ENCODE measurements at regions of chr11 and their contacts with region 1.

Region 1: DNA sequence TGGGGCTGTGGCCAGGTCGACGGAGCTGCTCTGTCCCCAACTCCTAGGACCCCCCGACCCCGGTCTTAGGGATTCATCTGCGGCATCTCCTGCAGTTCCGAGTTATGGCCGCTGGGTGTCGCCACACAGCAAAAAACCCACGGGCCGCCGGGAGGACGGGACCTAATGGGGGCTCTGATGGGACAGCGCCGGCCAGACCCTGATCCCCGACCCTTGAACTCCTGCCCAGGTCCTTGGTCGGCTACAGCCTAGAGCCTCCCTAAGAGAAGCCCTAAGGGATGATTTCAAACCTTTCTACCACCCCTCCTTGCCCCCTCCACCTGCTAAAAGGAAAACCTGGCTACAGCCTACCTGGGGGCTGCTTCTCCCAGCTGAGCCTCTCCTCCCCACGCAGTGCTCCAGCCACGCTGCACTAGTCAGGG is 30.8 kb upstream of the LRRC10B start:
- DNase-seq: peak; percentile 37 to 63
- ATAC-seq: peak; percentile 16 to 71; a peak in 3 of 6 replicates
- H3K4me3 ChIP-seq: no peak overlapping the region
- H3K27ac ChIP-seq: no peak overlapping the region
- H3K4me1 ChIP-seq: no peaks in the 10 kb centered on the region
- CTCF ChIP-seq: peak; percentile 88
- EP300 ChIP-seq: no peak
- POLR2A ChIP-seq: no peak
- RAD21 ChIP-seq: peak; percentile 89 to 90

Region 2: GRCh38 chr11:61453695-61454094 is 24.0 kb before region 1 on chr11:
- CTCF ChIA-PET with region 1: interaction called, 42 read pairs
- POLR2A ChIA-PET with region 1: no interaction called
- DNase-seq: no peak
- ATAC-seq: no peak
- H3K4me3 ChIP-seq: no peak overlapping the region
- H3K27ac ChIP-seq: no peak overlapping the region
- H3K4me1 ChIP-seq: no peaks in the 10 kb centered on the region
- CTCF ChIP-seq: no peak
- EP300 ChIP-seq: no peak
- POLR2A ChIP-seq: no peak
- RAD21 ChIP-seq: no peak

Region 3: GRCh38 chr11:61488651-61489291 is 11.0 kb after region 1 on chr11:
- CTCF ChIA-PET with region 1: interaction called, 51 read pairs
- POLR2A ChIA-PET with region 1: no interaction called
- DNase-seq: no peak
- ATAC-seq: peak in 1 of 2 experiments; percentile 14; a peak in 1 of 6 replicates
- H3K4me3 ChIP-seq: no peak overlapping the region
- H3K27ac ChIP-seq: no peak overlapping the region
- H3K4me1 ChIP-seq: no peaks in the 10 kb centered on the region
- CTCF ChIP-seq: no peak
- EP300 ChIP-seq: no peak
- POLR2A ChIP-seq: no peak
- RAD21 ChIP-seq: no peak

Region 4: GRCh38 chr11:61509043-61510029 is 31.6 kb after region 1 on chr11:
- CTCF ChIA-PET with region 1: interaction called, 97 read pairs
- POLR2A ChIA-PET with region 1: no interaction called
- DNase-seq: peak; percentile 79 to 90
- ATAC-seq: peak; percentile 87 to 95
- H3K4me3 ChIP-seq: peak overlapping the region; percentile 44
- H3K27ac ChIP-seq: peak overlapping the region in 1 of 2 experiments; percentile 66; a peak in 3 of 6 replicates
- H3K4me1 ChIP-seq: peaks cover 13% of the 10 kb centered on the region
- CTCF ChIP-seq: peak; percentile 54
- EP300 ChIP-seq: no peak
- POLR2A ChIP-seq: no peak
- RAD21 ChIP-seq: peak in 1 of 2 experiments; percentile 20; a peak in 3 of 5 replicates

Region 5: DNA sequence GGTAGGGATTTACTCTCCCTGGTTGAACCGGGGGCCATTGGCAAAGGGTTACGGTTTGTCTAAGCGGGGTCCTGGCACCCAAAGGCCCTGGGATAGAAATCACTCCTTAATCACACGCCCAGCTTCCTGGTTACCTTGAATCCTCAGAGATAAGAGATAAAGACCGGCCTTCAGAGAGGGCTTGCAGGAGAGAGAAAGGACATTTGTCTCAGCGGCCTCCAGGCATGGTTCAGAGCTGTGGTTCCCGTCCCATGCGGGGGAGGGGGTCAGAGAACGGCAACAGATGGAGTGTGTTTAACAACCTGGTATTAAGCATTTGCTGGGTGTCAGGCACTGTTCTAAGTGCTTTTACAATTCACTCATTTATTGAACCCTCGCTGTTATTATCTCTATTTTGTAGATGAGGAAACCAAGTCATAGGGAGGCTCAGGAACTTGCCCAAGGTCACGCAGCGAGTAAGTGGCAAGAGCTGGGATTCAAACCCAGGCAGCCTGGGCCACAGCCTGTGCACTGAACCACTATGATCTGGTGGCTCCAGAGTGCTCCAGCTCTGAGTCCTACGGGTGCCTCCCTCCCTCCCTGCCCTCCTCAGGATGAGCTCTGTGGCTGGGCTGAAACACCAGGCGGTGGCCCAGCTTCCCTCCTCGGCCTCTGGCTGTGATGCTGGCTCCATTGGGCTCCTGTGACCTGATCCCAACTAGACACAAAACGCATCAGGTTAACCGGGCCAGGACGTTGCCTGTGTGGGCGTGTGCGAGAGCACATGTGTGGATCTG is 49.4 kb after region 1 on chr11:
- CTCF ChIA-PET with region 1: interaction called, 131 read pairs
- POLR2A ChIA-PET with region 1: no interaction called
- DNase-seq: no peak
- ATAC-seq: no peak
- H3K4me3 ChIP-seq: no peak overlapping the region
- H3K27ac ChIP-seq: no peak overlapping the region
- H3K4me1 ChIP-seq: no peaks in the 10 kb centered on the region
- CTCF ChIP-seq: no peak
- EP300 ChIP-seq: no peak
- POLR2A ChIP-seq: no peak
- RAD21 ChIP-seq: no peak

Region 6: DNA sequence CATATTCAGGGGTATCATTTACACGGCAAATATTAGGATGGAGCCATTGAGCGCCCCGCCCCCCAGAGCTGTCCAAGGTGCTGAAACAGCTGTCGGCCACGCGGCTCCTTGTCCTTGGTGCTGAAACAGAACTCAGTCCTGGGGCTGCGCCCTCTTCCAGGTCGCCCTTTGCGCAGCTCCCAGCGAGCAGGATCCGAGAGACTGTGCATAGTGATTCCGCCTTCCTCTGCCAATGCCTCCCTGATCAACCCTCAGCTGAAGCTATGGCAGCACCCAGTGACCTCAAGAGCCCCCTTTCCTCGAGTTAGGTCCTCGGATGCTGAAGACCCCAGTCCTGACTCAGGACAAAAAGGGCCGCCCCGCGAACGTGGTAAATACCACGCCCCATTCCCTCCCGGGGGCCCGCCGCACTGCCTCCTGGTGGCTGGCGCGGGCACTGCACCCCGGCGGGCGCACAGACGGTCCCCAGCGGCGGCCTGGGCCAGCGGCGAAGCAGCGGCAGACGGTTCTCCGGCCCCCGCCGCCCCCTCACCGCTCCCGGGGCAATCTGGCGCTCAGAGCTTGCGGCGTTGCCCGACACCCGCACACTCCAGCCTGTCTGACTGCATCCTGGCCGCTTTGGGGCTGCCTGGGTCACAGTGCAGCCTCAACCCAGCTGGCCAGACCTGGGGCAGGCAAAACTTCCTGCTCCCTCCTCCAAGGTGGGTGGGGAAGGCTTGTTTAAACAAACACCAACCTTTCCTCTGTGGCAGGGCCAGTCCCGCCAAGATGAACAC is 89.7 kb after region 1 on chr11:
- CTCF ChIA-PET with region 1: interaction called, 27 read pairs
- POLR2A ChIA-PET with region 1: no interaction called
- DNase-seq: peak; percentile 87 to 92
- ATAC-seq: peak; percentile 73 to 92
- H3K4me3 ChIP-seq: peak overlapping the region; percentile 31; the same call in 1 of the 3 replicates
- H3K27ac ChIP-seq: no peak overlapping the region
- H3K4me1 ChIP-seq: peaks cover 5% of the 10 kb centered on the region; the same call in 1 of the 3 replicates
- CTCF ChIP-seq: peak; percentile 72
- EP300 ChIP-seq: no peak
- POLR2A ChIP-seq: no peak
- RAD21 ChIP-seq: peak; percentile 26 to 35; a peak in 3 of 5 replicates

Region 7: DNA sequence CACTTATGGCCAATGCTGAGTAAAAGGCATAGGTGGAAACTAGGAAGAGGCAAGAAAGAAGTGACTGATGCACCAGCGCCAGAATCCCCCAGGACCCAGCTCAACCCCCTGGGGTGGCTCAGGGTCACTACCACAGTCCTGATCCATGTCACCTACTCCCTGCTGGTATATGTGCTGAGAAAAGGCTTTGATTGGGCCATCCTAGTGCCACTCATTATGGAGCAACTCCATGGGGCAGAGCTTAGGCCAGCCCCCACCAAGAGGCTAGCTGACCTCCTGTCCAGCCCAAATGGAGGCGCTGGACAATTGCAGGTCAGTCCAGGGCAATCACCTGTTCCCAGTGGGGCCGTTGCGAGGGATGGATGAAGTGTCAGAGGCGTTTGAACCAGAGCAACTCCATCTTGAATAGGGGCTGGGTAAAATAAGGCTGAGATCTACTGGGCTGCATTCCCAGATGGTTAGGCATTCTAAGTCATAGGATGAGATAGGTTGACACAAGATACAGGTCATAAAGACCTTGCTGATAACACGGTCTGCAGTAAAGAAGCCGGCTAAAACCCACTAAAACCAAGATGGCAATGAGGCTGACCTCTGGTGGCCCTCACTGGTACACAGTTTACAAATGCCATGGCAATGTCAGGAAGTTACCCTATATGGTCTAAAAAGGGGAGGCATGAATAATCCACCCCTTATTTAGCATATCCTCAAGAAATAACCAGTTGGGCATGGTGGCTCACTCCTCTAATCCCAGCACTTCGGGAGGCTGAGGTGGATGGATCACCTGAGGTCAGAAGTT is 181.9 kb after region 1 on chr11:
- CTCF ChIA-PET with region 1: no interaction called
- POLR2A ChIA-PET with region 1: no interaction called
- DNase-seq: peak in 1 of 2 experiments; percentile 35
- ATAC-seq: peak; percentile 48 to 64; a peak in 4 of 6 replicates
- H3K4me3 ChIP-seq: no peak overlapping the region
- H3K27ac ChIP-seq: no peak overlapping the region
- H3K4me1 ChIP-seq: peaks cover 31% of the 10 kb centered on the region
- CTCF ChIP-seq: no peak
- EP300 ChIP-seq: no peak
- POLR2A ChIP-seq: no peak
- RAD21 ChIP-seq: no peak